Calu3 (cell line): ENCODE measurements at regions of chr3 and their contacts with region 1.

Region 1: DNA sequence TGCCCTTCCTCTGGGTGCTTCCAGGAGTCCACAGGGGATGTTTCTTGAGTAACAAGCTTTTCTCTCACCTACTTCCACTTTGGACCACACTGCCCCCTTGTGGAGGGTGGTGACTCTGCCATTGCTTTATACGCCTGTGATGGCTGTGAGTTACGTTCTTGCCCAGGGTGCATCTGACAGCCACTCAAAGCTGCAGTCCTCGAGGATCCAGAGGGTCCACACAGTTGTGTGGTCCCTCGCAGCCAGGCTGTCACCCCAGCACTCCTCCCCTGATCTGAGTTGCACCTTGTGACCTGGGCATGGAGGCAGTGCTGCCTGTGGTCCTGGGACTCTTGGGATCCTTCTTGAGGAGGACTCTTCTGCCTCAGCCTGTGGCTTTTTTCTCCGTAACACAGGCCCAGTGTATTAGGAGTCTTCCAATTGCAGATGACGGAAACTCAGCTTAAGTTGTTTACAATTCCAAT is 23.4 kb downstream of the FOXL2 start:
- DNase-seq: peak; percentile 98
- H3K4me3 Mint-ChIP-seq: no peak overlapping the region
- H3K27ac Mint-ChIP-seq: no peak overlapping the region
- H3K4me1 Mint-ChIP-seq: peaks cover 14% of the 10 kb centered on the region
- H3K27me3 Mint-ChIP-seq: no peaks in the 10 kb centered on the region
- CTCF ChIP-seq: peak; percentile 90

Region 2: GRCh38 chr3:138180375-138181029 is 743.1 kb before region 1 on chr3:
- CTCF ChIA-PET with region 1: no interaction called
- intact Hi-C with region 1: loop called (anchors 5 kb)
- DNase-seq: peak; percentile 51
- H3K4me3 Mint-ChIP-seq: no peak overlapping the region
- H3K27ac Mint-ChIP-seq: no peak overlapping the region
- H3K4me1 Mint-ChIP-seq: peaks cover 20% of the 10 kb centered on the region
- H3K27me3 Mint-ChIP-seq: no peaks in the 10 kb centered on the region
- CTCF ChIP-seq: peak; percentile 47

Region 3: DNA sequence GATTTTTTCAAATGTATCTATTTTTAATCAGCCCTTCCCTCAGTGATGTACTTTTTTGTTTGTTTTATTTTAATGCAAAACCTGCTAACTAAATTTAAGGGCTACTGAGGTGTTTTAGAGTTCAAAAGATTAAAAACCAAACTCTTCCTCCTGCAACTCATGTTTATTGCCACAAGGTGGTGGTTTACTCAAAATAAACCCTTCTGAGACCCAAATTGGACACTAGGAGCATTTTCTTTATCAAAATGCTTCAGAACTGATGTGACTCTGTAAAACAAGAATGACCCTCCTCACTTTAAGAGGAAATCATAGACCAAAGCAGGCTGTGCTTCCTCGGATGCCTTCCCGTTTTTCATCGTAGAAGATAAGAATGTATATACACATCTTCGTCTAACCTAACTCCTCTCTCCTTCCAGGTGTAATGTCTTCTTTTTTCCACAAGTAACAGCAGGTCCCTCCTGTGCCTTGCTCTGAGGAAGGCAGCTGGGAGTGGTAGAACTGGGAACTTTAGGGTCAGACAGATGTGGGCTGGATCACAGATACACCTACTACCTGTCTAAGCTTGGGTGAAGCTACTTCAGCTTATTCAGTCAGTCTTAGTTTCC is 591.0 kb before region 1 on chr3:
- CTCF ChIA-PET with region 1: no interaction called
- intact Hi-C with region 1: loop called (anchors 5 kb)
- DNase-seq: no peak
- H3K4me3 Mint-ChIP-seq: no peak overlapping the region
- H3K27ac Mint-ChIP-seq: no peak overlapping the region
- H3K4me1 Mint-ChIP-seq: peaks cover 7% of the 10 kb centered on the region
- H3K27me3 Mint-ChIP-seq: peaks cover 20% of the 10 kb centered on the region
- CTCF ChIP-seq: peak; percentile 58

Region 4: DNA sequence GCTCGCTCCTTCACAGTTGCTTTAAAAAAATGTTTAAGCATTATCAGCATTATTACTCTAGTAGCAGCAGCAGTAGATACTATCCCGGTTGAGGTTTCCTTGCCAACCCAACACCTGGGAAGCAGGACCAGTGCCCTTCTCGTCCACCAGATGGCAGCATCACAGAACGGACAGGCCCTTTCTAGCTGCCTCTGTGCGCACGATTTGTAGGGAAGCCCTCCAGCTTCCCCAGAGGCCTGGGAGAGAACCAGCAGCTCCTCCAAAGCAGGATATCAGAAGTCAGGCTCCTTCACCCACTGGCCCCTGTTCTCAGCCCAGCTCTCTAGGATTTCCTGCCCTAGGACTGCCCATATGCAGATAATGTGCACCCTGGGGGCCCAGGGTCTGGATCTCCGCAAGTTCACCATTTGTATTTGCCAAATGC is 506.0 kb before region 1 on chr3:
- CTCF ChIA-PET with region 1: interaction called, 40 read pairs
- intact Hi-C with region 1: loop called (anchors 1 kb)
- DNase-seq: peak; percentile 94
- H3K4me3 Mint-ChIP-seq: no peak overlapping the region
- H3K27ac Mint-ChIP-seq: no peak overlapping the region
- H3K4me1 Mint-ChIP-seq: no peaks in the 10 kb centered on the region
- H3K27me3 Mint-ChIP-seq: peaks cover 59% of the 10 kb centered on the region
- CTCF ChIP-seq: peak; percentile 90

Region 5: DNA sequence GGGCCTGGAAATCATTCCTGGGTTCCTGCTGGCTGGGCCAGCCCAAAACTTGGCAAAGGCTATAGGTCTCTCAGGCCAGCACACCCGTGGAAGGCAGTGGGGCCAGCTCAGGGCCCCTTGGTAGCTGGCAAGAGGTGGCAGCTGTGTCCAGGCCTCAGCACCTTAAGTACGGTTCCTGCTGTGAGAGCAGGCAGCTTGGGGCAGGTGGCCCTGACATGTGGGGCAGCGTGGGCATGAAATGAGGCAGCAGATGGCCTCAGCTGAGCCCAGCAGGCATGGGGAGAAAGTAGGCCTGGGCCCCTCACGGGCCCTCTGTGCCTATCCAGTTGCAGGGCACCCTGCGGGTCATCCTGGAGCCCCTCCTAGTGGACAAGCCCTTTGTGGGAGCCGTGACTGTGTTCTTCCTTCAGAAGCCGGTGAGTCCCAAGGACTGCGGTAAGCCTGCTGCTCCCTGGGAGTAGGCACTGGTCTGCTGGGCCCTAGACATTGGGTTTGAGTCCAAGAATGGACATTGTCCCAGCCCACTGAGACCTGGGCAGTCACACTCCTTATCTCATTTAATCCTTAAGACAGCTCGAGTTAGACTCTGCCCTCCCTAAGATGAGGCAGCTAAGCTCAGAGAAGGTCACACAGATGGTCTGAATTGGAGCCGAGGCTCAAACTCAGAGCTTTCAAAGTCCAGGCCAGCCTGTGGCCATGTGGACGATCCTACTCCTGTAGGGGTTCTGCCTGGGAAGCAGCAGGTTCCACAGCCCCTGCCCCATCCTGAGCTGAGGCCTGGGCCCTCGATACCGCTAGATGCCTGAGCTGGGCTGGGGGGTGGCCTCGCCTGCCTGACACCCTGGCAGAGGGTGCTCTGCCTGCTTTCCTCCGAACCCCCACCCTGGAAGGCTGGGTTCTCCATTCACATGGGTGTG is 463.7 kb before region 1 on chr3:
- CTCF ChIA-PET with region 1: no interaction called
- intact Hi-C with region 1: loop called (anchors 5 kb)
- DNase-seq: no peak
- H3K4me3 Mint-ChIP-seq: no peak overlapping the region
- H3K27ac Mint-ChIP-seq: no peak overlapping the region
- H3K4me1 Mint-ChIP-seq: no peaks in the 10 kb centered on the region
- H3K27me3 Mint-ChIP-seq: no peaks in the 10 kb centered on the region
- CTCF ChIP-seq: no peak

Region 6: DNA sequence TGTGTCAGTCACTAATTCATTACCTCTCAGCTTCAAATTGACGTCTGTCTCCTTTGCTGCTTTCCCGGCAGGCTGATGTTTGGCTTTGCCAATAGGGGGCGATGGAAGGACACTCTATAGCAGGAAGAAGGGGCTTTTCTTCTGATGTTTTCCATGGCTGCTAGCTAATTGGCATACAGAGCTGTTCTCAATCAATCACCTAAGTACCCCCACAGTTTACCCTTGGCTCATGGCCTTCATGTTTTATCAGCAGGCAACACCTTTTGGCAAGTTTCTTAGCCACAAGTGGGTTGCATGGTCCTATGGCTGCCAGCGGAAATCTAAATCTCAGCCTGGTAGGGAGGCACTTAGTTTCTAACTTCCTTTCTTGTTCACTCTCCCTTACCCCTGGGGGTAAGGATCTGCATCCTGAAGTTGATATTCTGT is 444.1 kb before region 1 on chr3:
- CTCF ChIA-PET with region 1: interaction called, 20 read pairs
- intact Hi-C with region 1: loop called (anchors 1 kb)
- DNase-seq: peak; percentile 79
- H3K4me3 Mint-ChIP-seq: no peak overlapping the region
- H3K27ac Mint-ChIP-seq: no peak overlapping the region
- H3K4me1 Mint-ChIP-seq: no peaks in the 10 kb centered on the region
- H3K27me3 Mint-ChIP-seq: no peaks in the 10 kb centered on the region
- CTCF ChIP-seq: peak; percentile 92

Region 7: DNA sequence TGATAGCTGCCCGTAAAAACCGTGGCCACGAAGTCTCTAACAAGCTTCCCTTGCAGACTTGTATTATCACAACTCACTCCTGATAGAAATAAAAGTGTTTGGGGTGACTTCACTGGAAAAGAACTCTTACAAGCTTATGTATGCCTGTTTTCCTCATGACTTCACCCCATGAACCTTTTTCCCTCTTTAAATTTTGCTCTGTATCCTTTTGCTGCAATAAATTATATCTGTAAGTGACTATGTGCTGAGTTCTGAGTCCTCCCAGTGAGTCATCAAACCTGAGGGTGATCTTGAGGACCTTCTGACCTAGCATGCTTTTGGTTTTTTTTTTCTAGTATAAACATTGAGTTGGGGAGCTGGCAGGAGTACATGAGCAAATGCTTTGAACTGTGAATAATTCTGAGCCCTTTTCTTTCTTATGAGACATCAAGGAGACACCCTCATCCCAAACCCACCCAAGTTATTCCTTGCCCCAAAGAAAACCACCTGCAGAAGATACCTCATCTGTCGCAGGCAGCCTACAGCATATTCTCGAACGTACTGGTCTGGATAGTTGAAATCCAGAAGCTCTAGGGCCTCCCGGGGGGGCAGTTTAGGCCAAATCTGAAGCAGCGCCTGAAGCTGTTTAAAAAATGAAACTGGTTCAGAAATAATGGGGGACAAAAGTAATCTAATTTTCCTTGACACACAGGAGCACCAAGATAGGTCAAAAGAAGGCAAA is 229.1 kb before region 1 on chr3:
- CTCF ChIA-PET with region 1: interaction called, 18 read pairs
- intact Hi-C with region 1: loop called (anchors 1 kb)
- DNase-seq: no peak
- H3K4me3 Mint-ChIP-seq: no peak overlapping the region
- H3K27ac Mint-ChIP-seq: no peak overlapping the region
- H3K4me1 Mint-ChIP-seq: peaks cover 13% of the 10 kb centered on the region
- H3K27me3 Mint-ChIP-seq: no peaks in the 10 kb centered on the region
- CTCF ChIP-seq: no peak

Region 8: DNA sequence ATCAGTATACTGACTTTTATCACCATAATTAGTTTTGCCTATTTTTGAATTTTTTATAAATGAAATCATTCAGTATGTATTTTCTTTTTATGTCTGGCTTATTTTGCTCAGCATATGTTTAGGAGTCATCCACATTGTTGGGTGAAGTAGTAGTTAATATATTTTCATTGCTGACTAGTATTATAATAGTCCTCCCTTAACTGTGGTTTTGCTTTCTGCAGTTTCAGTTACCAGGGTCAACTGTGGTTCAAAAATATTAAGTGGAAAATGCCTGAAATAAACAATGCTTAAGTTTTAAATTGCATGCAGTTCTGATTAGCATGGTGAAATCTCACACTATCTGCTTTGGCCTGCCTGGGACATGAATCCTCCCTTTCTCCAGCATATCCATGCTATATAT is 160.6 kb after region 1 on chr3:
- CTCF ChIA-PET with region 1: no interaction called
- intact Hi-C with region 1: no loop called
- DNase-seq: no peak
- H3K4me3 Mint-ChIP-seq: no peak overlapping the region
- H3K27ac Mint-ChIP-seq: no peak overlapping the region
- H3K4me1 Mint-ChIP-seq: no peaks in the 10 kb centered on the region
- H3K27me3 Mint-ChIP-seq: peaks cover 11% of the 10 kb centered on the region
- CTCF ChIP-seq: no peak